AG04450 (cell line): ENCODE measurements at regions of chr5 and their contacts with region 1.

Region 1: DNA sequence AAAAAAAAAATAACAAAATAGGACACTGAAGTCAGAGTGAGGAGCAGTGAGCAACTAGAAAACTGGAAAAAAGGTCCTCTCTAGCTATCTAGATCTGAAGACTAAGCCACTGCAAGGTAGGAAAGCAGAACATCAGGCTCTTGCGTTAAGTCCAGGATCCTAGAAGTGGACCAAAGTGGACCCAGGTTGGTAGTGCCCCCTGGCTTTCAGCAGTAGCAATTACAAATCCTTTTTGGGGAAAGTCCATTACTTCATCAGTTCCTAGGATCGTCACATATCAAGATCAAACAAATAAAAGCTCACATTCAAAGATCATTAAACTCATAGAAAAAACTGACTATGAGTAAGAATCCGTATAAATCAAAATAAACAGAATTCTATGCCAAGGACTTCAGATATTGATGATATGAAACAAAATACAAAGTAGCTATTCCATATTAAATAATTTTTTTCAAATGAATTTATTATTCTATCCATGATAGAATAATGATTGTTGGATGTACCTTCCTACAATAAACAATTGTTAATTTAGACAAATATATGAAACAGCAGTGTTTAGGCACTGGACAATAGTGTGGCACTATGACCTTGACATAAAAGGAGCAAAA is 6.5 kb upstream of the RICTOR start:
- DNase-seq: peak; percentile 47
- H3K4me3 ChIP-seq: no peak overlapping the region
- H3K27ac ChIP-seq: no peak overlapping the region
- H3K27me3 ChIP-seq: no peaks in the 10 kb centered on the region
- CTCF ChIP-seq: peak; percentile 84

Region 2: GRCh38 chr5:38948501-38948900 is 132.2 kb before region 1 on chr5:
- CTCF ChIA-PET with region 1: interaction called, 11 read pairs
- POLR2A ChIA-PET with region 1: no interaction called
- DNase-seq: peak; percentile 10
- H3K4me3 ChIP-seq: no peak overlapping the region
- H3K27ac ChIP-seq: no peak overlapping the region
- H3K27me3 ChIP-seq: no peaks in the 10 kb centered on the region
- CTCF ChIP-seq: no peak

Region 3: GRCh38 chr5:39005566-39006232 is 75.0 kb before region 1 on chr5:
- CTCF ChIA-PET with region 1: interaction called, 11 read pairs
- POLR2A ChIA-PET with region 1: no interaction called
- DNase-seq: no peak
- H3K4me3 ChIP-seq: no peak overlapping the region
- H3K27ac ChIP-seq: no peak overlapping the region
- H3K27me3 ChIP-seq: no peaks in the 10 kb centered on the region
- CTCF ChIP-seq: peak; percentile 38; the same call in 1 of the 2 replicates

Region 4: GRCh38 chr5:39092581-39093350 is 12.1 kb after region 1 on chr5:
- CTCF ChIA-PET with region 1: interaction called, 55 read pairs
- POLR2A ChIA-PET with region 1: no interaction called
- DNase-seq: no peak
- H3K4me3 ChIP-seq: no peak overlapping the region
- H3K27ac ChIP-seq: peak overlapping the region; percentile 59
- H3K27me3 ChIP-seq: no peaks in the 10 kb centered on the region
- CTCF ChIP-seq: no peak

Region 5: GRCh38 chr5:39109606-39110005 is 28.9 kb after region 1 on chr5:
- CTCF ChIA-PET with region 1: interaction called, 17 read pairs
- POLR2A ChIA-PET with region 1: no interaction called
- DNase-seq: no peak
- H3K4me3 ChIP-seq: no peak overlapping the region
- H3K27ac ChIP-seq: no peak overlapping the region
- H3K27me3 ChIP-seq: no peaks in the 10 kb centered on the region
- CTCF ChIP-seq: no peak

Region 6: GRCh38 chr5:39283231-39283818 is 202.6 kb after region 1 on chr5:
- CTCF ChIA-PET with region 1: interaction called, 16 read pairs
- POLR2A ChIA-PET with region 1: no interaction called
- DNase-seq: peak; percentile 29
- H3K4me3 ChIP-seq: no peak overlapping the region
- H3K27ac ChIP-seq: no peak overlapping the region
- H3K27me3 ChIP-seq: no peaks in the 10 kb centered on the region
- CTCF ChIP-seq: peak; percentile 81